ENCODE measurements at regions of chr11 and their contacts with region 1.

Region 1: GRCh38 chr11:6377902-6378639 is 12.2 kb upstream of the SMPD1 start:
- DNase-seq: no peak
- CTCF ChIP-seq: no peak

Region 2: GRCh38 chr11:6353367-6353987 is 24.6 kb before region 1 on chr11:
- CTCF ChIA-PET with region 1: interaction called, 25 read pairs
- POLR2A ChIA-PET with region 1: no interaction called
- DNase-seq: peak; percentile 67
- CTCF ChIP-seq: peak; percentile 95

Region 3: DNA sequence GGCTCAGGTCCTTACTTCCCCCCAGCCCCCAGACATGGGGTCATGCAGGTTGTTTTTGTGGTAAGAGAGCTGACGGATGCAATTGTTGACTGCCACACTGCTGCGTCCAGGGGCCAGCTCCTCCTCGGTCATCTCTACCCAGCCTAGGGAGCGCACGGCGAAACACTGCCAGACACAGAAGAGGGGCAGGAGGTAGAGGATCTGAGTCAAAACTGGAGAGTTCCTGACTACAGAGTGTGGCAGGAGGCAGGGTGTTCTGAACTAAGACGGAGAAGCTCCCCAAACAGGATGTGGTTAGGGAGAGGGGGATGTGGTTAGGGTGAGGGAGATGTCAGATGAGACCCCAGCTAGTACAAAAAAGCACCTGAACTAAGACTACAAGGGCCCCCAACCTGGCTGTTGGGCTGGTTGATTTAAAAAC is 24.5 kb after region 1 on chr11:
- CTCF ChIA-PET with region 1: interaction called, 59 read pairs
- POLR2A ChIA-PET with region 1: no interaction called
- DNase-seq: peak; percentile 77
- CTCF ChIP-seq: no peak

Region 4: DNA sequence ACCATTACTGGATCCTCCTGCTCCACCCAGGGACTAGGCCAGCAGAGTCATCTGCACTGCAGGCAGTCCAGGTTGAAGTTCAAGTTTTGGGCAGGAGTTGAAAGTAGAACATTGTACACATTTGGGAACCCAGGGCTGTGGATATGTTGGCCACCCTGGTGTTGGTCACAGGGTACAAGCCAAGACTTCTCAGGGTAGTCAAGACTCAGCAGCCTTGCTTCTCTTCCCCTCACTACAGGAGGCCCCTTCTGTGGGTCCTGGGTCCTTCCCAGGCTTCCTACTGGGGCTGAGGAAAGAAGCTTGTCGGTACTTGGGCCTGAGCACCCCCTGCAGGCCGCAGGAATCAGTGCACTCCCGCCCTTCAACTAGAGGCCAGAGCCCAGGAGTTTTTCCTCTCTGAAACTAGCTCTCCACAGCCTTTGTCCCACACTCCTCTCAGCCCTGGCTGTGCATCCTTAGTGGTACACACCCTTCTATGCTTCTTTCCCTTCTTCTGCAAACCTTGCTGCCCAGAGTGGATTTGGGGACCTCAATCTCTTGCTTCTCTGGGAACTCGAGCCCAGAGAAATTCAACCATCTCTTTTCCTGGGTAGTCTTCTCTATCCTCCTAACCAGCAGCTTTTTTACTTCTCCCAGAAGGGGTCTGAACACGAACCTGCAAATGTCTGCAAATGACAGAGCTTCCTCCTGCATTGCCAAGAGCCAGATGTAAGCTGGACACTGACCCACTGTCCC is 65.4 kb after region 1 on chr11:
- CTCF ChIA-PET with region 1: interaction called, 371 read pairs
- POLR2A ChIA-PET with region 1: no interaction called
- DNase-seq: peak; percentile 75
- CTCF ChIP-seq: peak; percentile 88

Region 5: GRCh38 chr11:6481012-6481923 is 103.2 kb after region 1 on chr11 and contains the starts of genes ARFIP2 and TIMM10B:
- CTCF ChIA-PET with region 1: interaction called, 10 read pairs
- POLR2A ChIA-PET with region 1: no interaction called
- DNase-seq: peak; percentile 99
- CTCF ChIP-seq: no peak

Region 6: DNA sequence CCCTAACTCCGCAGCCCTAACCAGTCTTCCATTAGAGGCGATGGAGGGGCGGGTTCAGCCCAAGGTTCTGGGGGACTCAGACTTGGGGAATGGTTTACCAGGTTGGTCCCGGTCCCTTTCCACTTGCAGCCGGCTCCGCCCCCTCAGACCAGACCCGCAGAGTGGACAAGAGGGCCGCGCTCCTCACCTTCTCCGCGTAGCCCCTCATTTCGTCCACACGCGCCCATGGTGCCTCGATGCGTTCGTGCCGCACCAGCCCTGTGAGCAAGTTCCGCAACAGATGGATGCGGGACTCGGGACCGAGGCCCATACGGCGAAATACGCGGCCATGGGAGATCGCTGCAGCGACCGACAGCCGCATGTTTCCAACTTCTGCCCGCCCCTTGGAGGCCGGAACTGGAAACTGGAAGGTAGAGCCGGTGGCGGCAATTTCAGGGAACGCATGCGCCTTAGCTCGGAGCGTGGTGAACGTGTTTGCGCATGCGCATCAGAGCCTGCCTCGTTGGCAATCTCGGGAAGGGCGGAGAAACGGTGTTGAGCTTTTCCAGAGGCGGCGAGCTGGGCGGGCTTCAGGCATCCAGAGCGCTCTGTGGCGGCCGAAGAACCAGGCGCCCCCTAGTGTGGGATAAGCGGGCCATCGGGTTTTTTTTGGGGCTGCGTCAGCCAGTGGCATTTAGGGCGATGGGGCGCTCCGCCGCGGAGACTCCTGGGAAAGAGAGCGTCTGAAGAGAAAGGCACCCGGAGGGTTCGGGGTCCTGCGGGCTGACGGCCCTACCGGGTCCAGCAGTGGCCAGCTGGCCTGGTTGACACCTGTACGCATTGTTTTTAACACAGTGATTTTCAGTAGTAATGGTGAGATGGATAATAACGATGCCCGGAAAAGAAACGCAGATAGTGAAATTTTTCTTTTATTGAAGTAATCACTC is 305.1 kb after region 1 on chr11 and contains the start of gene MRPL17:
- CTCF ChIA-PET with region 1: interaction called, 12 read pairs
- POLR2A ChIA-PET with region 1: no interaction called
- DNase-seq: peak; percentile 97
- CTCF ChIP-seq: peak; percentile 85

Measured in GM10248 (cell line).